ENCODE measurements at regions of chr14 and their contacts with region 1.

Region 1: DNA sequence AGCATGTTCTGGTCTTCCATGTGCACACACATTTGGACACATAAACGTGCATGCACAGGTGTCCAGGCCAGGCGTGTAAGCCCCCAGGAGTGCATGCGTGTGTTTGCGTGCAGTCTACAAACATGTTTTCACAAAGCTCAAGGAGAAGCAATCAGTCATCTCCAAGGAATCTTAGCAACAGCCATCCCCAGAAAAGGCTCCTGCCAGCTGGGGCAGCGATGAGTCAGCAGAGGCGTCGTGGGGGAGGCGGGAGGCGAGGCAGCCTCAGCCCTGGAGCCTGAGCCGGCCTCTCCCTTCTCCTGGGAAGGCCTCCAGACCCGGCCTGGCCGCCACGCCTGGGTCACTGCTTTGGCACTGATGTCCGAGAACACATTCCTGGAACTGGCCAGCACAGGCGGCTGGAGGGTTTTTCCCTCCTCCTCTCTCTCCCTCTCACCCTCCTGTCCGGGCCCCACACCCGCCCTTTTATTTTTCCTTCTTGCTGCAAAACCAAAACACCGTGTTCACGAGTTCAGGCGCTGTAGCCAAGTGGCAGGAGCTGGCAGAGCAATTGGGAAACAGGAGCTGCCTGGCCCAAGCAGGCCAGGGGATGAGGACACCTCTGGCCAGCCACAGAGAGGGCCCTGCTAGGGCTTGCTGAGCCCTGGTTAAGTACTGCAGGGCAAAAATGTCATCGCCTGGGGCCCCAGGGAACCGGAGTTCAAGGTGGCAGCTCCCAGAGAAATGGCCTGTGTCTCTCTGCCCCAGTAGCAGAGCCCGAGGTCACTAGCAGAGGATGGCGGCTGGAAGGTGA is 92.7 kb downstream of the LRRC74A start:
- DNase-seq: peak; percentile 94
- ATAC-seq: peak; percentile 94
- H3K4me3 ChIP-seq: peak overlapping the region; percentile 8
- H3K27ac ChIP-seq: peak overlapping the region; percentile 93
- H3K4me1 ChIP-seq: peaks cover 47% of the 10 kb centered on the region
- H3K27me3 ChIP-seq: no peaks in the 10 kb centered on the region
- CTCF ChIP-seq: peak; percentile 16

Region 2: GRCh38 chr14:76784266-76785264 is 134.4 kb before region 1 on chr14:
- intact Hi-C with region 1: no loop called
- DNase-seq: peak; percentile 72
- ATAC-seq: peak; percentile 85 to 91
- H3K4me3 ChIP-seq: no peak overlapping the region
- H3K27ac ChIP-seq: no peak overlapping the region
- H3K4me1 ChIP-seq: peaks cover 39% of the 10 kb centered on the region
- H3K27me3 ChIP-seq: no peaks in the 10 kb centered on the region
- CTCF ChIP-seq: peak; percentile 82

Region 3: GRCh38 chr14:77053046-77053841 is 134.3 kb after region 1 on chr14:
- intact Hi-C with region 1: loop called (anchors 5 kb)
- DNase-seq: peak; percentile 85
- ATAC-seq: peak; percentile 83
- H3K4me3 ChIP-seq: no peak overlapping the region
- H3K27ac ChIP-seq: peak overlapping the region; percentile 8
- H3K4me1 ChIP-seq: peaks cover 33% of the 10 kb centered on the region
- H3K27me3 ChIP-seq: no peaks in the 10 kb centered on the region
- CTCF ChIP-seq: peak; percentile 95